ENCODE measurements at regions of chr1 and their contacts with region 1.

Region 1: GRCh38 chr1:107795994-107796393 is 169.0 kb downstream of the VAV3 start:
- DNase-seq: peak in 2 of 3 donors; percentile 62 to 80
- H3K4me3 ChIP-seq: no peak overlapping the region
- H3K27ac ChIP-seq: no peak overlapping the region
- H3K4me1 ChIP-seq: peaks cover 3 to 28% (median 14%) of the 10 kb centered on the region in 4 experiments
- H3K27me3 ChIP-seq: no peaks in the 10 kb centered on the region

Region 2: DNA sequence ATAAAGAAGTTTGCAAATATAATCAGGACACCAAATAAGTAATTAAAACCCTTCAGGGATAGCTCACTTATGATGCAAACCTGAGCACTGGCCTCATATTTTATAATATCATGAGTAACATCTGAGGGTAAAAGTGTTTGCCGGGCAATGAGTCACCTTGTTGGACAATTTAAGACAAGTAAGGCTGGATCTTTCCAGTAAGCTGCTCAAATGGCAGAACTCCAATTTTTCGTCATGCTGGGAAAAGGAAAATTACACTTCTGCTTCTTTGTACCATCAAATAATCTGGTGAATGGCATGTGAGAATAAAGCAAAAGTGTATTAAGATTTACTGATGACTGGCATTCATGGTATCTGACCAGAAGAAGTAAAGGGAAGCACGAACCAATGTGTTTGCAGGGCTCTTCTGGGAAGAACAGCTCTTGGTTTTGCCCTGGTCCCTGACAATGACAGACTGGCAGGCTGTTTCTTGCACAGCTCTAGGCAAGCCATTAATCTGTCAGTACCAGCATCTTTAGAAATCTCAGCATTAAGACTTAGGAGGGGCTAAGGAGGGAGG is 223.3 kb before region 1 on chr1:
- CTCF ChIA-PET with region 1: no interaction called
- POLR2A ChIA-PET with region 1: no interaction called
- DNase-seq: no peak
- H3K4me3 ChIP-seq: no peak overlapping the region
- H3K27ac ChIP-seq: no peak overlapping the region
- H3K4me1 ChIP-seq: no peaks in the 10 kb centered on the region
- H3K27me3 ChIP-seq: no peaks in the 10 kb centered on the region

Region 3: GRCh38 chr1:107835151-107835670 is 39.2 kb after region 1 on chr1:
- CTCF ChIA-PET with region 1: interaction called, 13 read pairs
- POLR2A ChIA-PET with region 1: no interaction called
- DNase-seq: no peak
- H3K4me3 ChIP-seq: no peak overlapping the region
- H3K27ac ChIP-seq: no peak overlapping the region
- H3K4me1 ChIP-seq: peaks cover 40 to 92% (median 64%) of the 10 kb centered on the region in 4 experiments
- H3K27me3 ChIP-seq: no peaks in the 10 kb centered on the region